Right ventricle myocardium inferior (tissue), 1 donor: ENCODE measurements at regions of chr13 and their contacts with region 1.

Region 1: GRCh38 chr13:28531077-28531844 is 36.3 kb upstream of the FLT1 start:
- DNase-seq: peak; percentile 75
- ATAC-seq: peak; percentile 35

Region 2: GRCh38 chr13:28324181-28324789 is 207.0 kb before region 1 on chr13:
- intact Hi-C with region 1: loop called (anchors 5 kb)
- DNase-seq: no peak
- ATAC-seq: peak; percentile 74

Region 3: GRCh38 chr13:28337166-28338005 is 193.9 kb before region 1 on chr13:
- intact Hi-C with region 1: no loop called
- DNase-seq: no peak
- ATAC-seq: peak; percentile 30

Region 4: DNA sequence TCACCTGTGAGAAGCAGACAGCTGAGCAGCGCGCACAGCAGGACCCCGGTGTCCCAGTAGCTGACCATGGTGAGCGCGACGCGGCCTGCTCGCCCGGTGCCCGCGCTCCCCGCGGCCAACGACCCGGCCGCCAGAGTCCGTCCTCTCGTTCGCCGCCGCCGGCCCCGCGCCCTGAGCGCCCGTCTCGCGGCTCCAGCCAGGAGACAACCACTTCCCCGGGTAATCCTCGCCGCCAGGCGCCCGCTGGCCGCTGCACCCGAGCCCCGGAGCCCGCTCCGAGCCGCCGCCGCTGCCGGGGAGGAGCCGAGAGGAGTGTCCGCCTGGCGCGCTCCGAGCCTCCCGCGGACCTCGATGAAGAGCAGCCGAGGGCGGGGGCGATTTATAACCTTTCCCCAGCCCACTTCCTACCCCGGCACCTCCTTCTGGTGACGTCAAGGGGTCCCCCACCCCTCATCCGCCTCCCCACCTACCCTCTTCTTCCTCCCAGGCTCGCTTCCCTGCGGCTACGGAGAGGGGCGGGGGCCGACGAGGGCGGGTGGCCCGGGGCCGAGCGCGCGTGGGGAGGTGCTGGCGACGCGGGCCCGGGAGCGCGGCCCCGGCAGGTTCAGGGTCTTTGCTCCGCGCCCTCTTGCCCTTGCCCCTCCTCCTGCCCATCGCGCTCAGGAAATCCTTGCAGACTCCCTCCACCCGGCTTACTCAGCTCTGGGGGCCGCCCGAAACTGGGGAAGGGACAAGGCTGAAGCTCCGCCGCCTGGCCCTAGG is 36.3 kb before region 1 on chr13 and contains the start of gene FLT1:
- intact Hi-C with region 1: loop called (anchors 1 kb)
- DNase-seq: peak; percentile 79
- ATAC-seq: peak; percentile 69
- total RNA-seq, gene FLT1: 41.0 TPM

Region 5: GRCh38 chr13:29028868-29029267 is 497.6 kb after region 1 on chr13:
- intact Hi-C with region 1: no loop called
- DNase-seq: no peak
- ATAC-seq: no peak